Endothelial cell of umbilical vein (primary cell): ENCODE measurements at regions of chr7 and their contacts with region 1.

Region 1: DNA sequence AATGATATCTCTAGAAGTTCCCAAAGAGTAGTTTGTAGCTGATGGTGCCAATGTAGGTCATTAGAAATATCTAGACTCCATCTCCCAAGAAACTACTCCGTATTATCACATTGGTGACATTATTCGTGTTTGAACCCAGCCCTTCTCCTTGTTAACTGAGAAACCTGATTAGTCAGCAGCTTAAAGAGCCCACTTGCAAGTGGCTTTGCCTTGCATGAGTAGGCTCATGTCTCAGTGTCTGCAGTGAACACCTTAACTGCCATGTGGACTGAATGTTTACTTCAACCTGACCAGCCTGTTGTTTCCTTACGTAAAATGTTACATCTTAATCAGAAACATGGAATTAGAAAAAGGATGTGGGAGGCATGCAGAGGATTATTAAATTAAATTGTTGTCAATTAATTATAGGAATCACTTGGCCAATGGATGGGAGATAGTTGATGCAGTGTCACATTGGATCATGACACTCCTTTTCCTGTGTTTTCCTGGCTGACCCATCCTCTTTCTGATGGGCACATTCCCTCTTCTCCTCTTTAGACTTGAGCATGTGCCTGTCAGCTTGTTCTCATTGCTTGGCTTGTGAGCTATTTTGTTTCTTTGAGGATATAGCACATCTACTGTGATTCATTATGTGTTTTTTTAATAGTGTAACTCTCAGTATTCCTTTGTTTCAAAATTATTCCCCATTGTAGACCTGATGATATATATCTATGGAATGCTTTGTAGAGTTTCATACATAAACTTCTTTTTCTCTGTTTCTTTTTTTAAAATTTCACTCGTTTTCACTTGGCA is 18.0 kb downstream of the STARD3NL start:
- DNase-seq: peak; percentile 76
- H3K4me3 ChIP-seq: peak overlapping the region in 2 of 3 experiments; percentile 12 to 22
- H3K27ac ChIP-seq: peak overlapping the region; percentile 81
- H3K4me1 ChIP-seq: peaks cover 30% of the 10 kb centered on the region
- H3K27me3 ChIP-seq: no peaks in the 10 kb centered on the region
- CTCF ChIP-seq: no peak
- POLR2A ChIP-seq: no peak

Region 2: DNA sequence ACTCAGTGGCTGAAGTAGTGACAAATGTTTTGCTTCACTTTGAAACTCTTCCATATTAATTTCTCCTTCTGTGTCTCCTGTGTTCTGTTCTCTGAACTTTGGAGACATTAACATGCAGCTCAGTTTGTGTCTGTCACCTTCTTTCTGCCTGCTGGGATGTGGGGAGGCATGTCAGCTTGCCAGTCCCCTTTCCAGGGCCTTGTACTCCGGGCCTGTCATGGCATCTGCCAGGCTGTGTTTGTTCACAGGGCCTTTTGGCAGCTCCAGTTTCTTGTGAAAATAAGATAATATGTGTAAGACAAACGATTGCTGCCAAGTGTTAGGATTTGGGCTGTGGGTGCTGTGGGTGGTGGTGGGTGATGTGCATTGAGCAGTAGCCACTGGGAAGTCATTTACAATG is 671.2 kb before region 1 on chr7:
- CTCF ChIA-PET with region 1: no interaction called
- POLR2A ChIA-PET with region 1: no interaction called
- dilution Hi-C with region 1: no loop called
- intact Hi-C with region 1: no loop called
- DNase-seq: no peak
- H3K4me3 ChIP-seq: no peak overlapping the region
- H3K27ac ChIP-seq: no peak overlapping the region
- H3K4me1 ChIP-seq: no peaks in the 10 kb centered on the region
- H3K27me3 ChIP-seq: peaks cover 0 to 3% of the 10 kb centered on the region in 2 experiments
- CTCF ChIP-seq: no peak
- POLR2A ChIP-seq: no peak

Region 3: DNA sequence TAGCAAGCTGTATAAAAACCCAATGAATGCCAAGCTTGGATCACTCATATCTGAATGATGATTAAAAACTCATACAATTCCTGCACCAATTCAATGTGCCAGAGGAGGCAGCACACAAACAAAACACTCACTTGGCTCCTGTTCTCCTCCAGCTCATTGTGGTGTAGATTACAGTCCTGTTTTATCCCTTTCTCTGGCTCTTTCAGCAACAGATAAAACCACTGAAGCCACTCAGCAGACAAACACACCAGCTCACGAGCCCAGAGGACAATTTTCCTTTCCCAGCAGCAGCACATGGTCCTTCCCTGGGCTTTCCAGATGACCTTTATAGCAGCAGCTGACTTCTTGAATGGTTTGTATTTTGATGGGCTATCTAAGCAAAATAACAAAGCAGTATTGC is 125.3 kb before region 1 on chr7:
- CTCF ChIA-PET with region 1: no interaction called
- POLR2A ChIA-PET with region 1: no interaction called
- dilution Hi-C with region 1: no loop called
- intact Hi-C with region 1: no loop called
- DNase-seq: no peak
- H3K4me3 ChIP-seq: no peak overlapping the region
- H3K27ac ChIP-seq: no peak overlapping the region
- H3K4me1 ChIP-seq: no peaks in the 10 kb centered on the region
- H3K27me3 ChIP-seq: no peaks in the 10 kb centered on the region
- CTCF ChIP-seq: no peak
- POLR2A ChIP-seq: no peak

Region 4: DNA sequence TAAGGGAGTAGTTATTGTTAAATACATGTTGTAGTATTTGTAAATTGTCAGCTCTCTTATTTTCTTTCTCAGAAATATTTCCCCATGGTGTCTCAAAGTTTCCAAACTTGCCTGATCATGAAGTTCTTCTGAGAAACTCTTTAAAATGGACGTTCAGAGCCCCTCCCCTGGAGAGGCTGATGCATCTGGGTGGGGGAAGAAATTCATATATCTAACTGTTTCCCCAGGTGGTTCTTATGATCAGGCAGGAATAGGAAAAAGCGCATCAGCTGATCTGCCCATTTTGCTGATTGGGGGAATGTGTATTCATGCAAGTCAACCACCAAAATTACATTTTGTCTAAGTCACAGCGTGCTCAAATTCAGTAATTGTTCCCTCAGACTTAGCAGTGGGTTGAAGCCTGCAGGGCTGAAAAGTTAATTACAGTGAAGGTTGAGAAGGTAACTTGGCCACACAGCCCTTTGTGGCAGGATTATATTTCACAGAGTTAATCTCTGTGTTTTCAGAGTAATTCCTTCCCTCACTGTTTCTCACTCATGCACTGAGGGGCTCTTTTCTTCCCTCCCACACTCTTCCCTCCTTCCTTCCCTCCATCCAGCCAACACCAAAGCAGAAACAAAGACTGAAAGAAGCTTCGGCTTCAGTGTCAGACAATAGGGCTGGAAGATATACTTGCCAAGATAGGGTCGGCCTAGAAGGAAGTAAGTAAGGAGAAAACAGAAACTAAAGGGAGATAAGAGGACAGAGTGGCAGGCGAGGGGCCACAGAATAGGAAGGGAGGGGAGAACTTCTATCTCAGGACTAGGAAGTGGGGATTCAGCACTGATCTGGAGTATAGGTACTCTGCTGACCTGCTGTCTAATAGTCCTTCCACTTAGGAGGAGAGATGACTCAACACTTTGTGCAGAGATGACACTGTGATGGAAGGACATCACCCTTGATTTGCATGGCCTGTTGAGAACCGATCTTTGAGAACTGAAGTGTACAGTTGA is 68.5 kb before region 1 on chr7:
- CTCF ChIA-PET with region 1: no interaction called
- POLR2A ChIA-PET with region 1: no interaction called
- dilution Hi-C with region 1: no loop called
- intact Hi-C with region 1: no loop called
- DNase-seq: no peak
- H3K4me3 ChIP-seq: no peak overlapping the region
- H3K27ac ChIP-seq: no peak overlapping the region
- H3K4me1 ChIP-seq: no peaks in the 10 kb centered on the region
- H3K27me3 ChIP-seq: peaks cover 0 to 3% of the 10 kb centered on the region in 2 experiments
- CTCF ChIP-seq: no peak
- POLR2A ChIP-seq: no peak

Region 5: GRCh38 chr7:38142736-38143135 is 53.3 kb before region 1 on chr7:
- CTCF ChIA-PET with region 1: no interaction called
- POLR2A ChIA-PET with region 1: no interaction called
- dilution Hi-C with region 1: no loop called
- intact Hi-C with region 1: no loop called
- DNase-seq: no peak
- H3K4me3 ChIP-seq: no peak overlapping the region
- H3K27ac ChIP-seq: no peak overlapping the region
- H3K4me1 ChIP-seq: no peaks in the 10 kb centered on the region
- H3K27me3 ChIP-seq: no peaks in the 10 kb centered on the region
- CTCF ChIP-seq: no peak
- POLR2A ChIP-seq: no peak

Region 6: GRCh38 chr7:38178004-38178694 is 17.9 kb before region 1 on chr7 and contains the start of gene STARD3NL:
- CTCF ChIA-PET with region 1: interaction called, 28 read pairs
- POLR2A ChIA-PET with region 1: interaction called, 9 read pairs
- dilution Hi-C with region 1: no loop called
- intact Hi-C with region 1: loop called (anchors 1 kb)
- DNase-seq: peak; percentile 100
- H3K4me3 ChIP-seq: peak within 1 kb of the TSS; percentile 78 to 88 (median 85)
- H3K27ac ChIP-seq: peak within 1 kb of the TSS; percentile 88
- H3K4me1 ChIP-seq: peaks cover 34% of the 10 kb centered on the region
- H3K27me3 ChIP-seq: peaks cover 2 to 16% of the 10 kb centered on the region in 2 experiments
- CTCF ChIP-seq: no peak
- POLR2A ChIP-seq: peak; percentile 71
- total RNA-seq, gene STARD3NL: 68.9 and 73.6 TPM in 2 replicates